WTC11 (cell line): ENCODE measurements at regions of chr6 and their contacts with region 1.

Region 1: GRCh38 chr6:143575440-143575839 is 63.9 kb upstream of the FUCA2 start:
- DNase-seq: peak; percentile 32
- ATAC-seq: peak; percentile 81
- H3K4me3 Mint-ChIP-seq: no peak overlapping the region
- H3K27ac Mint-ChIP-seq: no peak overlapping the region
- H3K4me1 Mint-ChIP-seq: peaks cover 20% of the 10 kb centered on the region
- H3K27me3 Mint-ChIP-seq: no peaks in the 10 kb centered on the region; the same call in 1 of the 2 replicates
- CTCF ChIP-seq: peak; percentile 71

Region 2: GRCh38 chr6:143482593-143482992 is 92.8 kb before region 1 on chr6:
- CTCF ChIA-PET with region 1: no interaction called
- POLR2A ChIA-PET with region 1: no interaction called
- DNase-seq: no peak
- ATAC-seq: no peak
- H3K4me3 Mint-ChIP-seq: no peak overlapping the region
- H3K27ac Mint-ChIP-seq: no peak overlapping the region
- H3K4me1 Mint-ChIP-seq: no peaks in the 10 kb centered on the region
- H3K27me3 Mint-ChIP-seq: no peaks in the 10 kb centered on the region
- CTCF ChIP-seq: no peak

Region 3: DNA sequence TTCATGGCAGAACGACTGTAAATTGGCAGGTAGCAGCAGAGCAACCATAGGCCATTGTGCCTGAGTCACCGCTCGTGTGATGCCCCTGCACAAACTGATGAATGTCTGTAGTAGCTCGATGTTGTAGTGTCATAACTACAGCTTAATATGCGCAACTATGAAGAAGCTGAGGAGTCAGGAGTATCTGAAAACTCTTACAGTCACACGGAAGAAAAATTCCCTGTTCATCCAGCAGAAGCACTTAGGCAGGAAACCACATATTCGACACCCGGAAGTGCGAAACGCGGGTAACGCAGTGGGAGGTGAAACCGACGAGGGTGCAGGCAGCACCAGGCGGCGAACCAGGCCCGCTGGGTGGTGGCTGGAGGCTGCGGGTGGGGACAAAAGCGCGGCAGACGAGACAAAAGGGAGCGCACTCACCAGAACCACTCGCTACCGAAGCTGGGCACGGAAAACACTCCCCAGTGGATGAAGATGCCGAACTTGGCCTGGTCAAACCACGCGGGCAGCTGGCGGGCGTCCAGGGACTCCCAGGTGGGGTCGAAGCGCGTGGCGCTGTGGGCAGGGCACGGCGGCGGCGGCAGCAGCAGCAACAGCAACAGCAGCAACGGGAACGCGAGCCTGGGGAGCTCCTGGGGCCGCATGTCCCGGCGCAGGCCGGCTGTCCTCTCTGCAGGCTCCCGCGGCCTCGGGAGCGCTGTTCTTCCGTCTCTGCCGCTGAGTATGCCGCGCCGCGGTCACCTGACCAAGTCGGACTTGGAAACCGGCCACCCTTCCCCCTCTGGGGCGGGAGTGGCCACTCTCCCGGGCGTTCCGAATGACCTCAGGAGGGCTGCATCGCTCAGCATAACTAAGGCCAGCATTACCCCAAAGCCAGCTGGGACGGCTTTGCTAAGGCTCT is 64.2 kb before region 1 on chr6 and contains the start of gene FUCA2:
- CTCF ChIA-PET with region 1: interaction called, 13 read pairs
- POLR2A ChIA-PET with region 1: no interaction called
- DNase-seq: peak; percentile 87
- ATAC-seq: peak; percentile 90
- H3K4me3 Mint-ChIP-seq: peak within 1 kb of the TSS; percentile 83
- H3K27ac Mint-ChIP-seq: peak within 1 kb of the TSS; percentile 82
- H3K4me1 Mint-ChIP-seq: peaks cover 25% of the 10 kb centered on the region
- H3K27me3 Mint-ChIP-seq: peaks cover 10% of the 10 kb centered on the region
- CTCF ChIP-seq: no peak
- total RNA-seq, gene FUCA2: 48.5 to 55.4 TPM (median 51.8 TPM) in 3 replicates

Region 4: DNA sequence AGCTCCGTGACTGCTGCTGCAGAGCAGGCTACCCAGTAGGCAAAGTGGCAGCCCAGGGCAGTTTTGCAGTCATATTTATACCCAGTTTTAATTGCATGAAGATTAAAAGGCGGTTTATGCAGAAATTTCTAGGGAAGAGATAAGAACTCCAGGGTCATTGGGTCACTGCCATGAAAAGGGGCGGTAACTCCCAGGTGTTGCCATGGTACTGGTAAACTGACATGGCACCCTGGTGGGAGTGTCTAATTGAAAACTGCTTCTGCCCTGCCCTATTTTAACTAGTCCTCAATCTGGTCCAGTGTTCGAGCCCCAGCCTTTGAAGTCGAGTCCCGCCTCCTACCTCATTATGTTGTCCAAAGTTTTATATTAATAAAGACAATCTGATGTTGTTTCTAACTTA is 11.1 kb after region 1 on chr6:
- CTCF ChIA-PET with region 1: interaction called, 16 read pairs
- POLR2A ChIA-PET with region 1: no interaction called
- DNase-seq: peak; percentile 26
- ATAC-seq: peak; percentile 71
- H3K4me3 Mint-ChIP-seq: no peak overlapping the region
- H3K27ac Mint-ChIP-seq: no peak overlapping the region
- H3K4me1 Mint-ChIP-seq: peaks cover 12% of the 10 kb centered on the region
- H3K27me3 Mint-ChIP-seq: no peaks in the 10 kb centered on the region
- CTCF ChIP-seq: no peak

Region 5: GRCh38 chr6:143842902-143843676 is 267.6 kb after region 1 on chr6 and contains the start of gene LTV1:
- CTCF ChIA-PET with region 1: interaction called, 26 read pairs
- POLR2A ChIA-PET with region 1: interaction called, 3 read pairs
- DNase-seq: peak; percentile 95
- ATAC-seq: peak; percentile 97
- H3K4me3 Mint-ChIP-seq: peak within 1 kb of the TSS; percentile 98
- H3K27ac Mint-ChIP-seq: peak within 1 kb of the TSS; percentile 97
- H3K4me1 Mint-ChIP-seq: peaks cover 14% of the 10 kb centered on the region
- H3K27me3 Mint-ChIP-seq: no peaks in the 10 kb centered on the region
- CTCF ChIP-seq: no peak
- total RNA-seq, gene LTV1: 29.1 to 37.7 TPM (median 30.2 TPM) in 3 replicates

Region 6: DNA sequence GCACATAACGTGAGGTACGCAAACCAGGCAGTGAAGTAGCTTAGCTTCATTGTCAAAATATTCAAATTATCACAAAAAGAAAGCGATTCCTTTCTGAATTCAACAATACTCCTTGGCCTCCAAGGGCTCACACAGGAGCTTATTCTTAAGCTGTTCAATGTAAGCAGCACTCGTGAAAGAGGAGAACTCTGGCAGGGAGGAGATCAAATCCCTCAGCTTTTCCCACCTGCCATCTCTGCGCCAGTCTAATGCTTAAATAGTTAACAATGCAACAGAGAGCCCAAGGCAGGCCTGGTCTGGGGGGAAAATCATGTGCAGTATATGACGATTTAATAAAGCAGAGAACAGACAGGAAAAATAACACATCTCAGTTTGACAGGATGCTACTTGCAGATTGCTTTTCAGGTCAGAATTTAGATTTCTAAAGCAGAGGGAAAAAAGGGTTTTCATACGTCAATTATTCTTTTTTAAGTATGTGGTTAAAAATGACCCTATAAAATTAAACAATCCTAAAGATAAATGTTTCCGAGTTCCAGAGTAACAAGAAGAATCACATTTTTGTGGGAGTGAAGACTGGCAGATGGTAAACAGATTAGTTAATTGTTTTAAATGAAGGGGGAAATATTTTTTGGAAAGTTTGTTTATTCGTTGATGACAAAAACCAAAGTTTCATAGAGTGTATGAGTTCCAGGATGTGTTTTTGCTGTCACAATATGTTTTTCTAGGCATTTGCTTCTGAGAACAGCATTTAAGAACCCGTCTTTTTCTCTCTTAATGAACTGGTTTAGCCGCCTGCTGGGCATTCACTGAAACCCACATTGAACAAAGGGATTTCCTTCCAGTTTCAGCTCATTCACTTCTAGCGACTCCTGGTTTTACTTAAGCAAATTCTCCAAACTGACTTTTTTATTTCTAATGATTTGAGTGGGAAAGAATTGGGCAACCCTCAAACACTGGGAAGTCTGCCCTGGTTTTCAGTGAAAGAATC is 386.7 kb after region 1 on chr6:
- CTCF ChIA-PET with region 1: interaction called, 12 read pairs
- POLR2A ChIA-PET with region 1: no interaction called
- DNase-seq: no peak
- ATAC-seq: no peak
- H3K4me3 Mint-ChIP-seq: peak overlapping the region; percentile 14
- H3K27ac Mint-ChIP-seq: no peak overlapping the region
- H3K4me1 Mint-ChIP-seq: peaks cover 88% of the 10 kb centered on the region
- H3K27me3 Mint-ChIP-seq: no peaks in the 10 kb centered on the region
- CTCF ChIP-seq: no peak

Region 7: DNA sequence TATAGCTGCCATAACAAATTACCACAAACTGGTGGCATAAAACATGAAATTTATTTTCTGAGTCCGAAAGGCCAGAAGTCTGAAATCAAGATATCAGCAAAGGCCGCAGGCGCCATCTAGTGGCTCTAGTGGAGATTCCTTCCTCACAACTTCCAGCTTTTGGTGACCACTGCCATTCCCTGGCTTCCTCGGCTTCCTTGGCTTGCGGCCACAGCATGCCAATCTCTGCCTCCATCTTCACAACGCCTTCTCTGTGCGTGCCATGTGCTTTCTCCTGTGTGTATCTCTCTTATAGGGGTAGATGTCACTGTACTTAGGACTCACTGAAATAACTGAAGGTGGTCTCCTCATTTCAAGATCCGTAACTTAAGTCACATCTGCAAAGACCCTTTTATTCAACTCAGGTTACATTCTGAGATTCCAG is 438.1 kb after region 1 on chr6:
- CTCF ChIA-PET with region 1: interaction called, 21 read pairs
- POLR2A ChIA-PET with region 1: no interaction called
- DNase-seq: peak; percentile 79
- ATAC-seq: peak; percentile 63
- H3K4me3 Mint-ChIP-seq: no peak overlapping the region
- H3K27ac Mint-ChIP-seq: no peak overlapping the region
- H3K4me1 Mint-ChIP-seq: no peaks in the 10 kb centered on the region
- H3K27me3 Mint-ChIP-seq: peaks cover 50% of the 10 kb centered on the region
- CTCF ChIP-seq: peak; percentile 81